Right cardiac atrium (tissue), 5 donors: ENCODE measurements at regions of chr2 and their contacts with region 1.

Region 1: GRCh38 chr2:170715062-170715931 is at the start of gene SP5:
- DNase-seq: peak; percentile 30 to 75 (median 69)
- ATAC-seq: peak; percentile 44 to 76
- H3K4me3 ChIP-seq: peak within 1 kb of the TSS; percentile 74
- H3K27ac ChIP-seq: no peak within 1 kb of the TSS
- H3K4me1 ChIP-seq: peaks cover 3% of the 10 kb centered on the region
- H3K27me3 ChIP-seq: no peaks in the 10 kb centered on the region
- total RNA-seq, gene SP5: 0.94 TPM in 1 of 4 donors, not detected in the others

Region 2: GRCh38 chr2:170505631-170506275 is 209.5 kb before region 1 on chr2:
- intact Hi-C with region 1: loop called in 1 of 4 experiments (anchors 10 kb)
- DNase-seq: peak; percentile 57 to 90 (median 85)
- ATAC-seq: peak; percentile 82 to 86
- H3K4me3 ChIP-seq: no peak overlapping the region
- H3K27ac ChIP-seq: peak overlapping the region; percentile 39
- H3K4me1 ChIP-seq: peaks cover 3% of the 10 kb centered on the region
- H3K27me3 ChIP-seq: no peaks in the 10 kb centered on the region

Region 3: GRCh38 chr2:170932948-170933347 is 217.7 kb after region 1 on chr2:
- intact Hi-C with region 1: no loop called
- DNase-seq: no peak
- ATAC-seq: no peak
- H3K4me3 ChIP-seq: no peak overlapping the region
- H3K27ac ChIP-seq: no peak overlapping the region
- H3K4me1 ChIP-seq: no peaks in the 10 kb centered on the region
- H3K27me3 ChIP-seq: no peaks in the 10 kb centered on the region